Caco-2 (cell line): ENCODE measurements at regions of chr2 and their contacts with region 1.

Region 1: GRCh38 chr2:207896525-207897295 is 127.0 kb upstream of the FZD5 start:
- DNase-seq: peak; percentile 42 to 52
- H3K4me3 ChIP-seq: no peak overlapping the region
- H3K4me3 Mint-ChIP-seq: no peak overlapping the region
- H3K27ac Mint-ChIP-seq: no peak overlapping the region
- H3K4me1 ChIP-seq: peaks cover 35% of the 10 kb centered on the region
- H3K4me1 Mint-ChIP-seq: peaks cover 20% of the 10 kb centered on the region
- H3K27me3 ChIP-seq: no peaks in the 10 kb centered on the region
- H3K27me3 Mint-ChIP-seq: no peaks in the 10 kb centered on the region
- CTCF ChIP-seq: peak; percentile 39 to 44

Region 2: GRCh38 chr2:207869784-207870778 is 26.6 kb before region 1 on chr2:
- CTCF ChIA-PET with region 1: no interaction called
- POLR2A ChIA-PET with region 1: no interaction called
- intact Hi-C with region 1: loop called (anchors 2 kb)
- DNase-seq: peak in 1 of 2 experiments; percentile 57
- H3K4me3 ChIP-seq: no peak overlapping the region
- H3K4me3 Mint-ChIP-seq: no peak overlapping the region
- H3K27ac Mint-ChIP-seq: no peak overlapping the region
- H3K4me1 ChIP-seq: peaks cover 27% of the 10 kb centered on the region
- H3K4me1 Mint-ChIP-seq: peaks cover 6% of the 10 kb centered on the region
- H3K27me3 ChIP-seq: no peaks in the 10 kb centered on the region
- H3K27me3 Mint-ChIP-seq: no peaks in the 10 kb centered on the region
- CTCF ChIP-seq: no peak

Region 3: GRCh38 chr2:207930747-207931146 is 34.0 kb after region 1 on chr2:
- CTCF ChIA-PET with region 1: no interaction called
- POLR2A ChIA-PET with region 1: interaction called, 3 read pairs
- intact Hi-C with region 1: loop called (anchors 2 kb)
- DNase-seq: peak; percentile 86 to 89
- H3K4me3 ChIP-seq: peak overlapping the region; percentile 19
- H3K4me3 Mint-ChIP-seq: peak overlapping the region; percentile 79
- H3K27ac Mint-ChIP-seq: peak overlapping the region; percentile 87
- H3K4me1 ChIP-seq: peaks cover 77% of the 10 kb centered on the region
- H3K4me1 Mint-ChIP-seq: peaks cover 40% of the 10 kb centered on the region
- H3K27me3 ChIP-seq: no peaks in the 10 kb centered on the region
- H3K27me3 Mint-ChIP-seq: no peaks in the 10 kb centered on the region
- CTCF ChIP-seq: peak in 1 of 2 experiments; percentile 23

Region 4: GRCh38 chr2:208040199-208041171 is 143.8 kb after region 1 on chr2:
- CTCF ChIA-PET with region 1: interaction called, 10 read pairs
- POLR2A ChIA-PET with region 1: no interaction called
- intact Hi-C with region 1: no loop called
- DNase-seq: peak; percentile 80 to 83
- H3K4me3 ChIP-seq: no peak overlapping the region
- H3K4me3 Mint-ChIP-seq: no peak overlapping the region
- H3K27ac Mint-ChIP-seq: peak overlapping the region; percentile 24
- H3K4me1 ChIP-seq: peaks cover 20% of the 10 kb centered on the region
- H3K4me1 Mint-ChIP-seq: peaks cover 26% of the 10 kb centered on the region
- H3K27me3 ChIP-seq: no peaks in the 10 kb centered on the region
- H3K27me3 Mint-ChIP-seq: no peaks in the 10 kb centered on the region
- CTCF ChIP-seq: peak; percentile 73 to 81